CD8-positive, alpha-beta T cell (primary cell): ENCODE measurements at regions of chr6 and their contacts with region 1.

Region 1: GRCh38 chr6:24581084-24581669 is 64.8 kb downstream of the KIAA0319 start:
- DNase-seq: peak; percentile 57 to 86 (median 80)
- ATAC-seq: peak; percentile 92
- H3K4me3 ChIP-seq: no peak overlapping the region
- H3K4me3 Mint-ChIP-seq: no peak overlapping the region
- H3K27ac ChIP-seq: no peak overlapping the region
- H3K27ac Mint-ChIP-seq: no peak overlapping the region
- H3K4me1 ChIP-seq: no peaks in the 10 kb centered on the region
- H3K4me1 Mint-ChIP-seq: peaks cover 4% of the 10 kb centered on the region
- H3K27me3 ChIP-seq: no peaks in the 10 kb centered on the region
- H3K27me3 Mint-ChIP-seq: no peaks in the 10 kb centered on the region
- CTCF ChIP-seq: peak; percentile 71

Region 2: GRCh38 chr6:24494821-24495795 is 86.1 kb before region 1 on chr6 and contains the start of gene ALDH5A1:
- CTCF ChIA-PET with region 1: no interaction called
- POLR2A ChIA-PET with region 1: no interaction called
- intact Hi-C with region 1: loop called in 1 of 2 experiments (anchors 5 kb)
- DNase-seq: peak; percentile 60 to 91 (median 79)
- ATAC-seq: peak; percentile 84
- H3K4me3 ChIP-seq: peak within 1 kb of the TSS; percentile 62 to 85
- H3K4me3 Mint-ChIP-seq: peak within 1 kb of the TSS; percentile 87
- H3K27ac ChIP-seq: peak within 1 kb of the TSS; percentile 43 to 62
- H3K27ac Mint-ChIP-seq: peak within 1 kb of the TSS; percentile 87
- H3K4me1 ChIP-seq: peaks cover 12% of the 10 kb centered on the region
- H3K4me1 Mint-ChIP-seq: peaks cover 38% of the 10 kb centered on the region
- H3K27me3 ChIP-seq: no peaks in the 10 kb centered on the region
- H3K27me3 Mint-ChIP-seq: no peaks in the 10 kb centered on the region
- CTCF ChIP-seq: no peak
- total RNA-seq, gene ALDH5A1: 4.0 to 4.7 TPM

Region 3: DNA sequence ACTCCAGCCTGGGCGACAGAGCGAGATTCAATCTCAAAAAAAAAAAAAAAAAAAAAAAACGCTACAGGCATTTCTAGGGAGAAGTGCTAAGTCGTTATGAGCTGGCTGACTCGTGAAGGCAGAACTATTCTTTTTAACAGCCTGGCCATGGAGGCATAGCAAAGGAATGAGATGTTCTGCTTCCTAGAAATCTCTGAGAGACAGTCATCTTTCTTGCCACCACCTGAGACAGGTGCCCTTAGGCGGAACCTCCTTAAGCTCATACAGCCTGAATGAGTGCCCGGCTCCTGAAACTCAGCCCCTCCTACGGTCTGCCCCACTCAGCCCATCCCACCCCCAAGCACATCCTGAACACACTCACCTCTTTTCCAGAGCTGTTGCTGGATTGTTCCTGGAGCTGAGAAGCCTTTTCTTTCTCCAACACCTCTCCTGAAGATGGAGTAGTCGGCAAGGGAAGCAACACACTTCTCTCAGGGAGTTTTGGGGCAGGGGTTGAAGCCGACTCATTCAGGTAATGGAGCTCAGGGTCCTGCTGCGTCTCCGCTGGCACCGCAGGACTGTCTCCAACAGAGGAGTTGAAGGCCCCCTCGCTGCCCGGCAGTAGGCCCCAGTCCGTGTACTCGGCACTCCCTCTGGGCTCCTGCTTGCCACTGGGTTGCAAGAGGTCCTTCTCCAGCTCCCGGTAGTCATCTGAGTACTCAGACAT is 14.5 kb after region 1 on chr6:
- CTCF ChIA-PET with region 1: interaction called, 38 read pairs
- POLR2A ChIA-PET with region 1: no interaction called
- intact Hi-C with region 1: no loop called
- DNase-seq: no peak
- ATAC-seq: no peak
- H3K4me3 ChIP-seq: no peak overlapping the region
- H3K4me3 Mint-ChIP-seq: no peak overlapping the region
- H3K27ac ChIP-seq: no peak overlapping the region
- H3K27ac Mint-ChIP-seq: no peak overlapping the region
- H3K4me1 ChIP-seq: no peaks in the 10 kb centered on the region
- H3K4me1 Mint-ChIP-seq: no peaks in the 10 kb centered on the region
- H3K27me3 ChIP-seq: no peaks in the 10 kb centered on the region
- H3K27me3 Mint-ChIP-seq: peaks cover 5% of the 10 kb centered on the region
- CTCF ChIP-seq: no peak

Region 4: GRCh38 chr6:24689964-24690363 is 108.8 kb after region 1 on chr6:
- CTCF ChIA-PET with region 1: interaction called, 122 read pairs
- POLR2A ChIA-PET with region 1: no interaction called
- intact Hi-C with region 1: loop called (anchors 1 kb)
- DNase-seq: no peak
- ATAC-seq: no peak
- H3K4me3 ChIP-seq: no peak overlapping the region
- H3K4me3 Mint-ChIP-seq: no peak overlapping the region
- H3K27ac ChIP-seq: no peak overlapping the region
- H3K27ac Mint-ChIP-seq: no peak overlapping the region
- H3K4me1 ChIP-seq: peaks cover 10% of the 10 kb centered on the region
- H3K4me1 Mint-ChIP-seq: peaks cover 11% of the 10 kb centered on the region
- H3K27me3 ChIP-seq: no peaks in the 10 kb centered on the region
- H3K27me3 Mint-ChIP-seq: no peaks in the 10 kb centered on the region
- CTCF ChIP-seq: no peak

Region 5: GRCh38 chr6:24720604-24721460 is 139.7 kb after region 1 on chr6:
- CTCF ChIA-PET with region 1: interaction called, 4 read pairs
- POLR2A ChIA-PET with region 1: no interaction called
- intact Hi-C with region 1: loop called in 1 of 2 experiments (anchors 1 kb)
- DNase-seq: peak; percentile 100
- ATAC-seq: peak; percentile 80
- H3K4me3 ChIP-seq: peak overlapping the region; percentile 88 to 99
- H3K4me3 Mint-ChIP-seq: peak overlapping the region; percentile 92
- H3K27ac ChIP-seq: peak overlapping the region; percentile 97 to 100
- H3K27ac Mint-ChIP-seq: peak overlapping the region; percentile 98
- H3K4me1 ChIP-seq: peaks cover 37% of the 10 kb centered on the region
- H3K4me1 Mint-ChIP-seq: peaks cover 41% of the 10 kb centered on the region
- H3K27me3 ChIP-seq: no peaks in the 10 kb centered on the region
- H3K27me3 Mint-ChIP-seq: no peaks in the 10 kb centered on the region
- CTCF ChIP-seq: no peak

Region 6: GRCh38 chr6:24774696-24775519 is 193.7 kb after region 1 on chr6 and contains the start of gene GMNN:
- CTCF ChIA-PET with region 1: interaction called, 12 read pairs
- POLR2A ChIA-PET with region 1: no interaction called
- intact Hi-C with region 1: no loop called
- DNase-seq: peak; percentile 93 to 99 (median 98)
- ATAC-seq: peak; percentile 86
- H3K4me3 ChIP-seq: peak within 1 kb of the TSS; percentile 86 to 94
- H3K4me3 Mint-ChIP-seq: peak within 1 kb of the TSS; percentile 99
- H3K27ac ChIP-seq: peak within 1 kb of the TSS; percentile 83 to 85
- H3K27ac Mint-ChIP-seq: peak within 1 kb of the TSS; percentile 97
- H3K4me1 ChIP-seq: peaks cover 14% of the 10 kb centered on the region
- H3K4me1 Mint-ChIP-seq: peaks cover 22% of the 10 kb centered on the region
- H3K27me3 ChIP-seq: no peaks in the 10 kb centered on the region
- H3K27me3 Mint-ChIP-seq: no peaks in the 10 kb centered on the region
- CTCF ChIP-seq: no peak
- total RNA-seq, gene GMNN: 14.1 to 14.4 TPM